CD4-positive, alpha-beta T cell (primary cell): ENCODE measurements at regions of chr16 and their contacts with region 1.

Region 1: DNA sequence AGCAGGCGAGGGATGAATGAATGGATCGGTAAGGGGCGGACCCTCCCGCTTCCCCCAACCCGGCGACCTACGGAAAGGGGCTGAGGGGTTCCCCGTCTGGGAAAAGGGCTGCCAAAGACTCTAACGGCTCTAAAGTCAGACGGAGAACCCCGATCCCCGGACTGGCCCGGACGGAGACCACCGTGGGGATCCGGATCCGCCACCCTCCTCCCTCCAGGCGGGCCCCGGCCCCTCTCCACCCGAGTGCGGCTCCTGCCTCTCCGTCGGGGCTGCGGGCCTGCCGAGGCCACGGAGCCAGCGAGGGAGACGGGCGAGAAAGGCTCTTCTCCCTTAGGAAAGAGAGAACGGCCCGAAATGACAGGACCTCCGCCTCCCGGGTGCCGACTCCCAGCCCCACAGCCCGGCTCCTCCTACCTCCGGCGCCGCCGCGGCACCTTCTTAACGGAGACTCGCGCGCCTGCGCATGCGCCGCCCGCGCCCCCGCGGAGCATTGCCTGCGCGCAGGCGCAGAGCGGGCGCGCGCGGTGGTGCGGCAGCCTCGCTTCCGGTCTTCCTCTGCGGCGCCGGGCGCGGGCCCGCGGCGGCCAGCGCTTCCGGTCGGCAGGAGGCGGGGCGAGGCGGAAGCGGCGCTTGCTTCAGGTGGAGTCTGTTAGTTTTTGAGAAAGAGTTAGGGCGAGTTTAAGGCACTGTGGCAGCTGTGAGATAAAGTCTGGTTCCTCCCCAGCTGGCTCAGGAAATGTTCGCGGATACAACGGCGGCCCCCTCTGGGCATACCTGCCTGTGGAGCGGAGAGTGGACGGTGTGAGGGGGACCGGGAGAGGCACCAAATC is at the start of gene SLX4:
- DNase-seq: peak; percentile 76 to 99 (median 92)
- ATAC-seq: peak; percentile 86
- H3K4me3 ChIP-seq: peak within 1 kb of the TSS; percentile 95
- H3K4me3 Mint-ChIP-seq: peak within 1 kb of the TSS; percentile 98
- H3K27ac ChIP-seq: peak within 1 kb of the TSS; percentile 80 to 86
- H3K27ac Mint-ChIP-seq: peak within 1 kb of the TSS; percentile 90
- H3K4me1 ChIP-seq: peaks cover 37% of the 10 kb centered on the region
- H3K4me1 Mint-ChIP-seq: peaks cover 53% of the 10 kb centered on the region
- H3K27me3 ChIP-seq: no peaks in the 10 kb centered on the region
- H3K27me3 Mint-ChIP-seq: no peaks in the 10 kb centered on the region
- CTCF ChIP-seq: no peak
- total RNA-seq, gene SLX4: 5.1 to 5.2 TPM

Region 2: GRCh38 chr16:3542601-3543373 is 68.6 kb before region 1 on chr16:
- CTCF ChIA-PET with region 1: no interaction called
- POLR2A ChIA-PET with region 1: no interaction called
- intact Hi-C with region 1: no loop called
- DNase-seq: no peak
- ATAC-seq: no peak
- H3K4me3 ChIP-seq: no peak overlapping the region
- H3K4me3 Mint-ChIP-seq: no peak overlapping the region
- H3K27ac ChIP-seq: peak overlapping the region in 1 of 2 donors; percentile 33
- H3K27ac Mint-ChIP-seq: peak overlapping the region; percentile 36
- H3K4me1 ChIP-seq: no peaks in the 10 kb centered on the region
- H3K4me1 Mint-ChIP-seq: no peaks in the 10 kb centered on the region
- H3K27me3 ChIP-seq: no peaks in the 10 kb centered on the region
- H3K27me3 Mint-ChIP-seq: no peaks in the 10 kb centered on the region
- CTCF ChIP-seq: no peak

Region 3: GRCh38 chr16:3564130-3564888 is 47.1 kb before region 1 on chr16:
- CTCF ChIA-PET with region 1: no interaction called
- POLR2A ChIA-PET with region 1: no interaction called
- intact Hi-C with region 1: loop called in 1 of 2 experiments (anchors 5 kb)
- DNase-seq: no peak
- ATAC-seq: no peak
- H3K4me3 ChIP-seq: no peak overlapping the region
- H3K4me3 Mint-ChIP-seq: no peak overlapping the region
- H3K27ac ChIP-seq: no peak overlapping the region
- H3K27ac Mint-ChIP-seq: no peak overlapping the region
- H3K4me1 ChIP-seq: peaks cover 3% of the 10 kb centered on the region
- H3K4me1 Mint-ChIP-seq: no peaks in the 10 kb centered on the region
- H3K27me3 ChIP-seq: no peaks in the 10 kb centered on the region
- H3K27me3 Mint-ChIP-seq: no peaks in the 10 kb centered on the region
- CTCF ChIP-seq: no peak

Region 4: DNA sequence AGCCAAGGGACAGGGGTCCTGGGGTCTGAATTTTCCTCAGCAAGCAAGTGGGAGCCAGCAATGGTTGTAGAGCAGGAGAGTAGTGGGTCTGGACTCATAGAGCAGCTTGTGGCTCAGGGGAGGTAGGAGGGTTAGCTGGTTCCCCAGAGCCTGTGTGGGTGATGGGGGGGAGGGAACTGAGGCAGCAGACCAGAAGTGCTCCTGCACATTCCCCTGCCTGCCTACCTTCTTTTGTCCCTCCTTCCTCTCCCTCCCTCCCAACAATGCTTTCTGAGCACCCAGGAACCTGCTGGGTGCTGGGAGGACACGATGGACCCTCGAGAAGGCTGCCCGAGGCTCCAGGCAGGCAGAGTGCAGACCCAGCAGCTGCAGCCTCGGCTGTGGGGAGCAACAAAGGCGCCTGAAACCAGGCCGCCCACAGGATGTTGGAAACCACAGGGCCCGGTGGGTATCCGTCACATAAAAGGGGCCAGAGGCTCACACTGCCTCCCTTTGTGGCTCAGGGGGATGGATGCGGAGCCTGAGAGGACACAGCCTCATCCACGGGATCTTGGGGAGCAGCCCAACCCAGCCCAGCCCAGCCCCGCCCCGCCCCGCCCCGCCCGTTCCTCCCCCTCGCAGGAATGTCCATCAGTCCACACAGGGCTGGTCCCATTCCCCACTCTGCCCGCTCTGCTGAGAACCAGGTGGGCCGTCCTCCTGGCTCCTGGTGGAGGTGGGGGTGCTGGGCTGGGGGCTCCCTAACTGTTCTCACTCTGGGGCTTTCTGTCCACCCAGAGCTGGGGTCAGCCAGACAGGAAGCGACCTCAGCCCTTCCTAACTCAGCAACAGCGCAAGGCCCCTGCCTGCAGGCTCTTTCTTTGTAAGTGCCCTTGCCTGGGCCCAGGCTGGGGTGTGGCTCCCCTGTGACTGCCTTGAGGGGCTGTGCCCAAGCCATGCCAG is 32.5 kb before region 1 on chr16:
- CTCF ChIA-PET with region 1: no interaction called
- POLR2A ChIA-PET with region 1: interaction called, 4 read pairs
- intact Hi-C with region 1: loop called (anchors 2 to 5 kb)
- DNase-seq: peak in 12 of 14 experiments; percentile 19 to 82 (median 48)
- ATAC-seq: peak; percentile 44
- H3K4me3 ChIP-seq: peak overlapping the region; percentile 85
- H3K4me3 Mint-ChIP-seq: peak overlapping the region; percentile 98
- H3K27ac ChIP-seq: peak overlapping the region; percentile 70 to 87
- H3K27ac Mint-ChIP-seq: peak overlapping the region; percentile 95
- H3K4me1 ChIP-seq: peaks cover 58% of the 10 kb centered on the region
- H3K4me1 Mint-ChIP-seq: peaks cover 62% of the 10 kb centered on the region
- H3K27me3 ChIP-seq: no peaks in the 10 kb centered on the region
- H3K27me3 Mint-ChIP-seq: no peaks in the 10 kb centered on the region
- CTCF ChIP-seq: no peak

Region 5: GRCh38 chr16:3590736-3591435 is 20.5 kb before region 1 on chr16:
- CTCF ChIA-PET with region 1: no interaction called
- POLR2A ChIA-PET with region 1: no interaction called
- intact Hi-C with region 1: no loop called
- DNase-seq: no peak
- ATAC-seq: no peak
- H3K4me3 ChIP-seq: no peak overlapping the region
- H3K4me3 Mint-ChIP-seq: no peak overlapping the region
- H3K27ac ChIP-seq: no peak overlapping the region
- H3K27ac Mint-ChIP-seq: no peak overlapping the region
- H3K4me1 ChIP-seq: no peaks in the 10 kb centered on the region
- H3K4me1 Mint-ChIP-seq: no peaks in the 10 kb centered on the region
- H3K27me3 ChIP-seq: no peaks in the 10 kb centered on the region
- H3K27me3 Mint-ChIP-seq: no peaks in the 10 kb centered on the region
- CTCF ChIP-seq: no peak

Region 6: GRCh38 chr16:3654249-3654991 is 43.1 kb after region 1 on chr16 and contains the start of gene DNASE1:
- CTCF ChIA-PET with region 1: no interaction called
- POLR2A ChIA-PET with region 1: no interaction called
- intact Hi-C with region 1: no loop called
- DNase-seq: peak; percentile 19 to 74 (median 40)
- ATAC-seq: peak; percentile 77
- H3K4me3 ChIP-seq: no peak within 1 kb of the TSS
- H3K4me3 Mint-ChIP-seq: no peak within 1 kb of the TSS
- H3K27ac ChIP-seq: no peak within 1 kb of the TSS
- H3K27ac Mint-ChIP-seq: peak within 1 kb of the TSS; percentile 55
- H3K4me1 ChIP-seq: peaks cover 3% of the 10 kb centered on the region
- H3K4me1 Mint-ChIP-seq: peaks cover 5% of the 10 kb centered on the region
- H3K27me3 ChIP-seq: no peaks in the 10 kb centered on the region
- H3K27me3 Mint-ChIP-seq: no peaks in the 10 kb centered on the region
- CTCF ChIP-seq: peak; percentile 71
- total RNA-seq, gene DNASE1: 9.5 to 10.4 TPM

Region 7: GRCh38 chr16:3717235-3718018 is 106.1 kb after region 1 on chr16 and contains the start of gene TRAP1:
- CTCF ChIA-PET with region 1: no interaction called
- POLR2A ChIA-PET with region 1: no interaction called
- intact Hi-C with region 1: loop called in 1 of 2 experiments (anchors 5 kb)
- DNase-seq: peak; percentile 83 to 96 (median 91)
- ATAC-seq: peak; percentile 98
- H3K4me3 ChIP-seq: peak within 1 kb of the TSS; percentile 98
- H3K4me3 Mint-ChIP-seq: peak within 1 kb of the TSS; percentile 92
- H3K27ac ChIP-seq: peak within 1 kb of the TSS; percentile 72 to 92
- H3K27ac Mint-ChIP-seq: peak within 1 kb of the TSS; percentile 89
- H3K4me1 ChIP-seq: peaks cover 33% of the 10 kb centered on the region
- H3K4me1 Mint-ChIP-seq: peaks cover 31% of the 10 kb centered on the region
- H3K27me3 ChIP-seq: no peaks in the 10 kb centered on the region
- H3K27me3 Mint-ChIP-seq: no peaks in the 10 kb centered on the region
- CTCF ChIP-seq: no peak
- total RNA-seq, gene TRAP1: 68.0 to 75.9 TPM